ENCODE measurements at regions of chr18 and their contacts with region 1.

Region 1: DNA sequence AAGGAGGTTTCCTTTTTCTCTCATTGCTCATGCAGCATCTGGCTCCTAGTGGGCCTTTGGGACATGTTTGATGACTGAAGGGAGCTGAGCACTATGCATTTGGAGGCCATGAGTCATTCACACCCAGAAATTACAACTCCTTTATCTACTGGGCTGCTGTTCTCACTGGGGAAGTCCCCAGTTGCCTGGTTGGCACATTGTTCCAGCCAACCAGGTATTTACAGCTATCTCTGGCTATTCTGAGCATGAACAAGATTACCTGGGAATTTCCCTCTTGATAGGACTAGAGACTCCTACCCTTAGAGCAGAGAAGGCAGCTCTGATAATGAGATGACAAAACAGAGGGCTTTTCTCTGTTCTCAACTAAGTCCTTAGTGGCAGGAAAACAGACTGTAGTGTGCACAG is 206.5 kb downstream of the SETBP1 start:
- DNase-seq: no peak

Region 2: DNA sequence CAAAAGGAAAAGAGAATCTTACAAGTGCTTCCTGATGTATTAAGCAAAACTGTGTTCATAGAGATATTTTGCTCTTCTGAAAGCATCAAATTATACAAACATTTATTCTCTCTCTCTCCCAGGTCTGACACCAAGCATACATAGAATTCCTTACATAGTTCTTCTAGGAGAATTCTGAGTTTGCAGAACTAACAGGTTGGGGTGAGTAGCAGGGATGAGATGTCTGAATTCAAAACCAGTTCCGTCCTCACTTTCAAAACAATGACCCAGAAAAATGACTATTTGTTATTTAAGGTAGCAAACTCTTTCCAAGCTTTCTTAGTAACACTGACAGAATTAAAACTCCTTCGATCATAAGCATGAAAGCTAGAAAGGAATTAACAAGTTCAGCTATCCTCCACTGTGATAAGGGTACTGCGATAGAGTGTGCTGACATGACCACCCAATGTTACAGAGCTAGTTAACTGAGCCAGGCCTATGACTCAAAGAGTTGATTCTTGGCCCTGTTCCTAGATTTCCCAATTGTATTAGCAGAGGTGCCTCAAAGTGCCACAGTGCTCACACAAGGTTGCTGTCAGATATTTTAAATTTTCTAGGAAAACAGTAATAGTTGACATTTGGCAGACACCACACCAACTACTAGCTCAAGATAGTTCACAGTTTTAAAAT is 292.3 kb before region 1 on chr18:
- intact Hi-C with region 1: loop called (anchors 10 kb)
- DNase-seq: no peak

Region 3: GRCh38 chr18:44799907-44800421 is 87.3 kb before region 1 on chr18:
- intact Hi-C with region 1: loop called (anchors 10 kb)
- DNase-seq: no peak

Region 4: GRCh38 chr18:44852818-44853217 is 34.4 kb before region 1 on chr18:
- intact Hi-C with region 1: loop called (anchors 5 kb)
- DNase-seq: no peak

Region 5: GRCh38 chr18:45090526-45091140 is 203.4 kb after region 1 on chr18:
- intact Hi-C with region 1: no loop called
- DNase-seq: no peak

Region 6: GRCh38 chr18:45212181-45213039 is 325.2 kb after region 1 on chr18:
- intact Hi-C with region 1: loop called (anchors 10 kb)
- DNase-seq: peak; percentile 86